ENCODE measurements at regions of chr4 and their contacts with region 1.

Region 1: GRCh38 chr4:77600521-77601451 is 4.8 kb upstream of the CXCL13 start:
- DNase-seq: peak in 4 of 9 donors; percentile 8 to 27 (median 12)
- ATAC-seq: peak; percentile 63
- H3K4me3 ChIP-seq: no peak overlapping the region
- H3K4me3 Mint-ChIP-seq: no peak overlapping the region
- H3K27ac ChIP-seq: no peak overlapping the region
- H3K27ac Mint-ChIP-seq: no peak overlapping the region
- H3K4me1 ChIP-seq: peaks cover 0 to 1% of the 10 kb centered on the region in 2 donors
- H3K4me1 Mint-ChIP-seq: peaks cover 0 to 8% (median 4%) of the 10 kb centered on the region in 7 donors
- H3K27me3 ChIP-seq: no peaks in the 10 kb centered on the region
- H3K27me3 Mint-ChIP-seq: peaks cover 2 to 15% (median 8%) of the 10 kb centered on the region in 5 donors

Region 2: DNA sequence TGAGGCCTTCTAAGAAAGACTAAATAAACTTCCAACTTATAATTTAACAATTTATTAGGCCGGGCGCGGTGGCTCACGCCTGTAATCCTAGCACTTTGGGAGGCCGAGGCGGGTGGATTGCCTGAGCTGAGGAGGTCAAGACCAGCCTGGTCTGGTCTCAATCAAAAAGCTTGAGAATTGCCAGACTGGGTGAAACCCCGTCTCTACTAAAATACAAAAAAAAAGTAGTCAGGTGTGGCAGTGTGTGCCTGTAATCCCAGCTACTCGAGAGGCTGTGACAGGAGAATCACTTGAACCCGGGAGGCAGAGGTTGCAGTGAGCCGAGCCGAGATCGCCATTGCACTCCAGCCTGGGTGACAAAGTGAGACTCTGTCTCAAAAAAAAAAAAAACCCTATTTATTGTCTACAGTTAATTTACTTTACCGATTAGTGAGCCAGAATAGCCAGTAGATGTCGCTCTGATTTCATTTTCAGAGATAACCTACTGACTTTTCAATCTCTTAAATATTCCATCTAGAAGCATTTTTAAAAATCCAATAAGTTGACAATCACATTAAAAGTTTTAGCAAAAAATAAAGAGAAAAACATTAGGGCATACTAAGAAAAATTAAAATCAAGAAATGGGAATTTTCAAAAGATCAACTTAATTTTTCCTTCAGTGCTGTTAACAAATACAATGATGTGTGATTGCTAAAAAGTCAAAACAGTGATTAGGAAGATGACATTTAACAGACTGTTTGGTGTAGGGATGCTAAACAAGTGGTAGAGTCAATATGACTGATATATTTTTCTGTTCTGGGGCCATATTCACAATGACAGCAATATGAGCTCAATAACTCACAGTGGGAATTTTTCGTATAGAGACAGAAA is 1170.0 kb before region 1 on chr4:
- CTCF ChIA-PET with region 1: no interaction called
- POLR2A ChIA-PET with region 1: no interaction called
- intact Hi-C with region 1: loop called in 1 of 2 experiments (anchors 2 kb)
- DNase-seq: peak in 3 of 9 donors; percentile 17 to 32 (median 18)
- ATAC-seq: no peak
- H3K4me3 ChIP-seq: no peak overlapping the region
- H3K4me3 Mint-ChIP-seq: no peak overlapping the region
- H3K27ac ChIP-seq: no peak overlapping the region
- H3K27ac Mint-ChIP-seq: no peak overlapping the region
- H3K4me1 ChIP-seq: no peaks in the 10 kb centered on the region
- H3K4me1 Mint-ChIP-seq: peaks cover 0 to 4% (median 0%) of the 10 kb centered on the region in 7 donors
- H3K27me3 ChIP-seq: no peaks in the 10 kb centered on the region
- H3K27me3 Mint-ChIP-seq: peaks cover 20 to 37% (median 22%) of the 10 kb centered on the region in 5 donors

Region 3: GRCh38 chr4:77172336-77172735 is 428.4 kb before region 1 on chr4:
- CTCF ChIA-PET with region 1: no interaction called
- POLR2A ChIA-PET with region 1: no interaction called
- intact Hi-C with region 1: no loop called
- DNase-seq: no peak
- ATAC-seq: no peak
- H3K4me3 ChIP-seq: no peak overlapping the region
- H3K4me3 Mint-ChIP-seq: no peak overlapping the region
- H3K27ac ChIP-seq: no peak overlapping the region
- H3K27ac Mint-ChIP-seq: no peak overlapping the region
- H3K4me1 ChIP-seq: no peaks in the 10 kb centered on the region
- H3K4me1 Mint-ChIP-seq: peaks cover 0 to 8% (median 0%) of the 10 kb centered on the region in 7 donors
- H3K27me3 ChIP-seq: no peaks in the 10 kb centered on the region
- H3K27me3 Mint-ChIP-seq: peaks cover 0 to 15% (median 0%) of the 10 kb centered on the region in 5 donors

Region 4: GRCh38 chr4:77240469-77241066 is 360.2 kb before region 1 on chr4:
- CTCF ChIA-PET with region 1: no interaction called
- POLR2A ChIA-PET with region 1: no interaction called
- intact Hi-C with region 1: loop called (anchors 1 to 5 kb)
- DNase-seq: peak in 8 of 9 donors; percentile 11 to 59 (median 30)
- ATAC-seq: peak; percentile 47
- H3K4me3 ChIP-seq: no peak overlapping the region
- H3K4me3 Mint-ChIP-seq: no peak overlapping the region
- H3K27ac ChIP-seq: no peak overlapping the region
- H3K27ac Mint-ChIP-seq: peak overlapping the region in 1 of 9 donors; percentile 10
- H3K4me1 ChIP-seq: no peaks in the 10 kb centered on the region
- H3K4me1 Mint-ChIP-seq: no peaks in the 10 kb centered on the region
- H3K27me3 ChIP-seq: no peaks in the 10 kb centered on the region
- H3K27me3 Mint-ChIP-seq: peaks cover 3 to 12% (median 6%) of the 10 kb centered on the region in 5 donors

Region 5: DNA sequence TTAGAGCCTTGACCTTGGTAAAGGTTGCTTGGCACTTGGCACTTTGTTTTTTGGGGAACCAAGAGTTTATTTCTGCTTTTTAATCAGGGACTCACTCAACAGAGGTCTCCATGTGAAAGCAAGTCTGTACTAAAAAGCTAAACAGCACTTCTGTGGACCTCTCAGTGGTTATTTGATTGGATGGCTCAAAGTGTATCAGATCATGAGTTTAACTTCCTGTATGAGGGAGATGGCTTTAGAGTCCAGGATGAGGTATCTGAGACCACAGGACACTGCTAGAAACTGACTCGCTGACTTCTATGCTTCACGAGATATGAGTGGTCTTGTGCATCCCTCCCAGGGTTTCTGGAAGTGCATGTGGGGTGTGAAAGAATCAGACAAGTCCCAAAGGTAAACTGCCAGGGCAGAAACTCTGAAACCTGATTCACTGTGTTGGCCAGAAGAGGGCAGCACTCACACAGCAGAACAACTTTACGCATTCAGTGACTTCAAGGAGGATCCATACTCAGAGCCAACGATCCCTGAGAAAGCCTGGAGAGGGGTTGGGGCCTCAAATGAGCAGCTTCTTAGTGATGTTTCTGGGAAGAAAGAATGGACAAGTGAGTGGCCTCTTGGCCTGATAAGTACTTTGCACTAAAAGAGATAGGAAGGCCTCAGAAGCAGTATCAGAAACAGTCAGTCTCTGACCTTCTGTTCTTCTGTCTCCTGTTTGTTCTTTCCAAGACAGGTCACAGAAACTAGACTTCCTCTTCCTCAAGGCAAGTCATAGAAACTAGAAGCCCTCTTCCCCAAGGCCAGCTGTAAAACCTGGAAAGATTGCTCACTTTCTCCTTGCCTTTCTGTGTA is 215.4 kb before region 1 on chr4:
- CTCF ChIA-PET with region 1: interaction called, 3 read pairs
- POLR2A ChIA-PET with region 1: no interaction called
- intact Hi-C with region 1: loop called (anchors 1 kb)
- DNase-seq: peak in 7 of 9 donors; percentile 19 to 51 (median 39)
- ATAC-seq: peak; percentile 72
- H3K4me3 ChIP-seq: no peak overlapping the region
- H3K4me3 Mint-ChIP-seq: no peak overlapping the region
- H3K27ac ChIP-seq: no peak overlapping the region
- H3K27ac Mint-ChIP-seq: no peak overlapping the region
- H3K4me1 ChIP-seq: no peaks in the 10 kb centered on the region
- H3K4me1 Mint-ChIP-seq: peaks cover 0 to 8% (median 0%) of the 10 kb centered on the region in 7 donors
- H3K27me3 ChIP-seq: no peaks in the 10 kb centered on the region
- H3K27me3 Mint-ChIP-seq: peaks cover 0 to 8% (median 0%) of the 10 kb centered on the region in 5 donors

Region 6: GRCh38 chr4:77465271-77465670 is 135.5 kb before region 1 on chr4:
- CTCF ChIA-PET with region 1: no interaction called
- POLR2A ChIA-PET with region 1: no interaction called
- intact Hi-C with region 1: loop called in 1 of 2 experiments (anchors 1 kb)
- DNase-seq: peak in 1 of 9 donors; percentile 33
- ATAC-seq: no peak
- H3K4me3 ChIP-seq: no peak overlapping the region
- H3K4me3 Mint-ChIP-seq: no peak overlapping the region
- H3K27ac ChIP-seq: no peak overlapping the region
- H3K27ac Mint-ChIP-seq: no peak overlapping the region
- H3K4me1 ChIP-seq: no peaks in the 10 kb centered on the region
- H3K4me1 Mint-ChIP-seq: no peaks in the 10 kb centered on the region
- H3K27me3 ChIP-seq: no peaks in the 10 kb centered on the region
- H3K27me3 Mint-ChIP-seq: peaks cover 0 to 27% (median 13%) of the 10 kb centered on the region in 5 donors

Region 7: GRCh38 chr4:77586951-77587383 is 13.8 kb before region 1 on chr4:
- CTCF ChIA-PET with region 1: interaction called, 3 read pairs
- POLR2A ChIA-PET with region 1: no interaction called
- intact Hi-C with region 1: loop called in 1 of 2 experiments (anchors 1 kb)
- DNase-seq: peak in 2 of 9 donors; percentile 8 to 64
- ATAC-seq: peak; percentile 89
- H3K4me3 ChIP-seq: no peak overlapping the region
- H3K4me3 Mint-ChIP-seq: peak overlapping the region in 1 of 10 donors; percentile 64
- H3K27ac ChIP-seq: no peak overlapping the region
- H3K27ac Mint-ChIP-seq: peak overlapping the region in 2 of 9 donors; percentile 10 to 75
- H3K4me1 ChIP-seq: no peaks in the 10 kb centered on the region
- H3K4me1 Mint-ChIP-seq: peaks cover 0 to 33% (median 9%) of the 10 kb centered on the region in 7 donors
- H3K27me3 ChIP-seq: no peaks in the 10 kb centered on the region
- H3K27me3 Mint-ChIP-seq: peaks cover 0 to 9% (median 0%) of the 10 kb centered on the region in 5 donors